ENCODE measurements at regions of chr12 and their contacts with region 1.

Region 1: DNA sequence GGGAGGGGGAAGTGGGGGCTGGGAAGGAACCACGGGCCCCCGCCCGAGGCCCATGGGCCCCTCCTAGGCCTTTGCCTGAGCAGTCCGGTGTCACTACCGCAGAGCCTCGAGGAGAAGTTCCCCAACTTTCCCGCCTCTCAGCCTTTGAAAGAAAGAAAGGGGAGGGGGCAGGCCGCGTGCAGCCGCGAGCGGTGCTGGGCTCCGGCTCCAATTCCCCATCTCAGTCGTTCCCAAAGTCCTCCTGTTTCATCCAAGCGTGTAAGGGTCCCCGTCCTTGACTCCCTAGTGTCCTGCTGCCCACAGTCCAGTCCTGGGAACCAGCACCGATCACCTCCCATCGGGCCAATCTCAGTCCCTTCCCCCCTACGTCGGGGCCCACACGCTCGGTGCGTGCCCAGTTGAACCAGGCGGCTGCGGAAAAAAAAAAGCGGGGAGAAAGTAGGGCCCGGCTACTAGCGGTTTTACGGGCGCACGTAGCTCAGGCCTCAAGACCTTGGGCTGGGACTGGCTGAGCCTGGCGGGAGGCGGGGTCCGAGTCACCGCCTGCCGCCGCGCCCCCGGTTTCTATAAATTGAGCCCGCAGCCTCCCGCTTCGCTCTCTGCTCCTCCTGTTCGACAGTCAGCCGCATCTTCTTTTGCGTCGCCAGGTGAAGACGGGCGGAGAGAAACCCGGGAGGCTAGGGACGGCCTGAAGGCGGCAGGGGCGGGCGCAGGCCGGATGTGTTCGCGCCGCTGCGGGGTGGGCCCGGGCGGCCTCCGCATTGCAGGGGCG is at the start of gene GAPDH:
- DNase-seq: peak; percentile 93
- H3K4me3 Mint-ChIP-seq: peak within 1 kb of the TSS; percentile 96
- H3K27ac Mint-ChIP-seq: peak within 1 kb of the TSS; percentile 100
- H3K4me1 Mint-ChIP-seq: peaks cover 44% of the 10 kb centered on the region
- H3K27me3 Mint-ChIP-seq: no peaks in the 10 kb centered on the region
- total RNA-seq, gene GAPDH: 5,823 to 5,836 TPM

Region 2: DNA sequence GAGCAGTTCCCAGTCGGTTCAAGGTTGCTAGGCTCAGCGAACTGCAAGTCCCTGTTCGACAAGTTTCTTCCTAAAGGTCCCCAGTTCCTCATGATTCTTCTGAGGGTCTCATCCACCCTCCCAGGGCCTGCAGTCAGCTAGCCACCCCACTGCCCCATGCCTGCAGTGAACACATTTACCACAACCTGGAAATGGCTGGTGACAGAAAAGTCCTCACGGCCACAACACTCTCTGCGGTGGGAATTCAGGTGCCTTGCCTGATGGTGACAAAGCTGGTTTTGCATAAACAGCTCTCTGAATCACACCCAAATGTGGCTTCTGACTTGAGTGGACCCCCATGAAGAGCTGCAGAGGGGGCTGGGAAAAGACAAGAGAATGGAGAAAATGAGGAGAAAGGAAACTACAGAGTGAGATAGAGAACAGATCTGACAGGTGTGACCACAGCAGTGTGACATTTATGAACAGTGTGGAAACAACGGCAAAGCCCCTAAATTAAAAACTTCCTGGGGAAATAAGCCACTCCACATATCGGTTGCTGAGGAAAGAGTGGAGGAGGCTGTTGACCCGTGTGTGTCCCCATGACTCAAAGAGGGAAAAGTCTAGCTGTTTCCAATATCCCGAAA is 90.6 kb before region 1 on chr12:
- CTCF ChIA-PET with region 1: interaction called, 3 read pairs
- POLR2A ChIA-PET with region 1: interaction called, 12 read pairs
- intact Hi-C with region 1: no loop called
- DNase-seq: peak; percentile 75
- H3K4me3 Mint-ChIP-seq: peak overlapping the region; percentile 91
- H3K27ac Mint-ChIP-seq: peak overlapping the region; percentile 98
- H3K4me1 Mint-ChIP-seq: peaks cover 69% of the 10 kb centered on the region
- H3K27me3 Mint-ChIP-seq: no peaks in the 10 kb centered on the region

Region 3: GRCh38 chr12:6493497-6494257 is 40.4 kb before region 1 on chr12 and contains the start of gene NCAPD2:
- CTCF ChIA-PET with region 1: interaction called, 9 read pairs
- POLR2A ChIA-PET with region 1: interaction called, 20 read pairs
- intact Hi-C with region 1: loop called (anchors 1 kb)
- DNase-seq: peak; percentile 98
- H3K4me3 Mint-ChIP-seq: peak within 1 kb of the TSS; percentile 94
- H3K27ac Mint-ChIP-seq: peak within 1 kb of the TSS; percentile 100
- H3K4me1 Mint-ChIP-seq: peaks cover 38% of the 10 kb centered on the region
- H3K27me3 Mint-ChIP-seq: no peaks in the 10 kb centered on the region
- total RNA-seq, gene NCAPD2: 192 to 196 TPM

Region 4: DNA sequence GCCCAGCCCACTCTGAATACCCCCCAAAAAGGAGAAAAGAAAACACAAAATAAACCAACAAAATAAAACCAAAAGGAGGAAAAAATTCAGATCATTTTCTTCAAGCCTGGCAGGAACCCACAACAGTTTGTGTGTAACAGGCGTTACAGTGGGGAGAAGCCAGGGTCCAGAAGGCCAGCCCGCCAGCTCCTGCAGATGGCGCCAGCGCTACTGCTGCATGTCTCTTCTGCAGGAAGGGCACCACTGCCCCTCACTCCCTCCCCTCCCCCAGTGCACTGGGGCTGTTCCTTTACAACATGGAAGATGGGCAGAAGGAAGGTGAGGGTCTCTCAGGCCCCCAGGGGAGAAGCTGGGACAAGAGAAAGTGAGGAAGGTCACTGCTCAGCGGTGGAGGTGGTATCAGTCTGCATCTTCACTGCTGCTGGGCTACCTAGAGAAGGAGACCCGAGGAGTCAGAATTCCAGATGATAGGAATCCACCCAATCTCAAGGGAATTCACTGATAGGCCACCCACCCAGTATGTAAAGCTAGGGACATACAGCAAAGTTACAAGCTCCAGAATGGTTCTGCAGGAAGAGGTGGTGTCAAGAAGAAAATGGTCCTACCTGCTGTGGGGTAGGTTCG is 36.3 kb after region 1 on chr12:
- CTCF ChIA-PET with region 1: interaction called, 4 read pairs
- POLR2A ChIA-PET with region 1: interaction called, 5 read pairs
- intact Hi-C with region 1: loop called (anchors 2 kb)
- DNase-seq: peak; percentile 67
- H3K4me3 Mint-ChIP-seq: no peak overlapping the region
- H3K27ac Mint-ChIP-seq: peak overlapping the region; percentile 63
- H3K4me1 Mint-ChIP-seq: peaks cover 63% of the 10 kb centered on the region
- H3K27me3 Mint-ChIP-seq: no peaks in the 10 kb centered on the region

Region 5: DNA sequence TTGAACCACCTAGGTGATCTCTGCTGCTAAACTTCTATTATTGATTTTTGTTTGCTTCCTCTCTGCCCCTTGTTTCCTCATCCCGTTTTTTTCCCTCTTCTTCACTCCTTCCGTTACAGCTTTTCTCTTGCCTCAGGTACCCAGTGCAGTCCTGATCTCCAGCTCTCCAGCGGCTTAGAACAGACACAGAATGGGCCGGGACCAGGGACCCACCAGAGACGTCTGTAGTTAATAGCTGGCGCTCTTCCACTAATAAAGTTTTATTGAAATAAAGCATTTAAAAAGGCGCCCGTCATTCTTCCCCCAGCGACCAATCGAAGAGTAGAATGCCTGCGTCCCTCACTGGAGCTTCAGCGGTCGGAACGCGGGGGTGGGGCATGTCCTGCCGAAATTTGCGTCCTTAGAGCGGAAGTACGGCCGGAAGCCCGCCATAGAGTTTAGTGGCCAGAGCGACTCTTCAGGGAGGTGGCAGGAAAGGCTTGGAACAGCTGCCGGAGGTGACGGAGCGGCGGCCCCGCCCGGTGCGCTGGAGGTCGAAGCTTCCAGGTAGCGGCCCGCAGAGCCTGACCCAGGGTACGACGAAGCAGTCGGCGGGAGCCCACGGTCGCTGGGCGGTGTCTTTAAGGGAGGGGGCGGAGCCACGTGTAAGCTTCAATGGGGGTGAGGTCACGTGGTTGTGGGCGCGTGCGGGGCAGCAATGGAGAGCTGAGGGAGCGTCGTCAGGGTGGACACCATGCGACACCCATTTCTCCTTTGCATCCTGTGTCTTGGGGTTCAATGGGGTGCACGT is 189.7 kb after region 1 on chr12 and contains the start of gene COPS7A:
- CTCF ChIA-PET with region 1: no interaction called
- POLR2A ChIA-PET with region 1: interaction called, 14 read pairs
- intact Hi-C with region 1: no loop called
- DNase-seq: peak; percentile 99
- H3K4me3 Mint-ChIP-seq: peak within 1 kb of the TSS; percentile 83
- H3K27ac Mint-ChIP-seq: peak within 1 kb of the TSS; percentile 84
- H3K4me1 Mint-ChIP-seq: peaks cover 25% of the 10 kb centered on the region
- H3K27me3 Mint-ChIP-seq: no peaks in the 10 kb centered on the region
- total RNA-seq, gene COPS7A: 37.6 to 39.4 TPM

Measured in activated CD4-positive, alpha-beta memory T cell treated with anti-CD3 and anti-CD28 coated beads for 36 hours (primary cell).